ENCODE measurements at regions of chr17 and their contacts with region 1.

Region 1: GRCh38 chr17:40113110-40113906 is 8.5 kb upstream of the MSL1 start:
- DNase-seq: peak; percentile 86 to 96 (median 93)
- ATAC-seq: peak; percentile 78
- H3K4me3 ChIP-seq: peak overlapping the region; percentile 40
- H3K4me3 Mint-ChIP-seq: peak overlapping the region; percentile 82
- H3K27ac ChIP-seq: peak overlapping the region; percentile 12 to 22
- H3K27ac Mint-ChIP-seq: peak overlapping the region; percentile 89
- H3K4me1 ChIP-seq: peaks cover 55% of the 10 kb centered on the region
- H3K4me1 Mint-ChIP-seq: peaks cover 60% of the 10 kb centered on the region
- H3K27me3 ChIP-seq: no peaks in the 10 kb centered on the region
- H3K27me3 Mint-ChIP-seq: no peaks in the 10 kb centered on the region
- CTCF ChIP-seq: peak; percentile 81

Region 2: DNA sequence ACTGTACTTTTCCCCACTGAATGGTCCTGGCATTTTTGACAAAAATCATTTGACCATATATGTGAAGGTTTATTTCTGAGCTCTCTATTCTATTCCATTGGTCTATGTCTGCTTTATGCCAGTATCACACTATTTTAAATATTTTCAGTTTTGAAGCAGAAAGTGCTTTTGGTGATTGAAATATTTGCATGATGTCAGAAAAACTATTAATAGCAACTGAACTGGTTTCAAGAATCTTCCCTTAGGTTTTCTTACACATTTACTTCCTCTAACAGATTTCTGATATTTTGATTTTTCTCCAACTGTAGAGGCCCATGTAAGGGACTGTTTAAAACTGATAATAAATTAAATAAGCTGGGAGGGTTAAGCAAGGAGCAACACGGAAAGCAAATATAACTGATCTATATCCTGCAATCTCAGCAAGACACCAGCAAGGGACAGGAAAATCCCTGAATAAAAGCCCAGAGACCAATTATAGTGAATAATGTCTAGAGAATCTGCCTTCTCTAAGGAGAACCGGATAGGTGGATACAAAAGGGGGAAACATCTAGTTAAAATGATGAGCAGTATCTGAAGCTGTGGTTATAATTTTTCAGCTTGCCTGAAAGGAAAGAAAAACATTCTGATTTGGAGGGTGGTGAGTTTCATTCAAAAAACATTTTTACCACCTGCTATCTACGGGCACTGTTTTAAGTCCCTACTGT is 806.6 kb before region 1 on chr17:
- CTCF ChIA-PET with region 1: no interaction called
- POLR2A ChIA-PET with region 1: no interaction called
- intact Hi-C with region 1: no loop called
- DNase-seq: no peak
- ATAC-seq: no peak
- H3K4me3 ChIP-seq: no peak overlapping the region
- H3K4me3 Mint-ChIP-seq: no peak overlapping the region
- H3K27ac ChIP-seq: no peak overlapping the region
- H3K27ac Mint-ChIP-seq: no peak overlapping the region
- H3K4me1 ChIP-seq: no peaks in the 10 kb centered on the region
- H3K4me1 Mint-ChIP-seq: no peaks in the 10 kb centered on the region
- H3K27me3 ChIP-seq: no peaks in the 10 kb centered on the region
- H3K27me3 Mint-ChIP-seq: no peaks in the 10 kb centered on the region
- CTCF ChIP-seq: no peak

Region 3: GRCh38 chr17:39894681-39895376 is 218.5 kb before region 1 on chr17:
- CTCF ChIA-PET with region 1: no interaction called
- POLR2A ChIA-PET with region 1: no interaction called
- intact Hi-C with region 1: no loop called
- DNase-seq: no peak
- ATAC-seq: no peak
- H3K4me3 ChIP-seq: no peak overlapping the region
- H3K4me3 Mint-ChIP-seq: no peak overlapping the region
- H3K27ac ChIP-seq: no peak overlapping the region
- H3K27ac Mint-ChIP-seq: peak overlapping the region; percentile 16
- H3K4me1 ChIP-seq: no peaks in the 10 kb centered on the region
- H3K4me1 Mint-ChIP-seq: peaks cover 10% of the 10 kb centered on the region
- H3K27me3 ChIP-seq: peaks cover 0 to 2% of the 10 kb centered on the region in 2 experiments
- H3K27me3 Mint-ChIP-seq: no peaks in the 10 kb centered on the region
- CTCF ChIP-seq: no peak

Region 4: DNA sequence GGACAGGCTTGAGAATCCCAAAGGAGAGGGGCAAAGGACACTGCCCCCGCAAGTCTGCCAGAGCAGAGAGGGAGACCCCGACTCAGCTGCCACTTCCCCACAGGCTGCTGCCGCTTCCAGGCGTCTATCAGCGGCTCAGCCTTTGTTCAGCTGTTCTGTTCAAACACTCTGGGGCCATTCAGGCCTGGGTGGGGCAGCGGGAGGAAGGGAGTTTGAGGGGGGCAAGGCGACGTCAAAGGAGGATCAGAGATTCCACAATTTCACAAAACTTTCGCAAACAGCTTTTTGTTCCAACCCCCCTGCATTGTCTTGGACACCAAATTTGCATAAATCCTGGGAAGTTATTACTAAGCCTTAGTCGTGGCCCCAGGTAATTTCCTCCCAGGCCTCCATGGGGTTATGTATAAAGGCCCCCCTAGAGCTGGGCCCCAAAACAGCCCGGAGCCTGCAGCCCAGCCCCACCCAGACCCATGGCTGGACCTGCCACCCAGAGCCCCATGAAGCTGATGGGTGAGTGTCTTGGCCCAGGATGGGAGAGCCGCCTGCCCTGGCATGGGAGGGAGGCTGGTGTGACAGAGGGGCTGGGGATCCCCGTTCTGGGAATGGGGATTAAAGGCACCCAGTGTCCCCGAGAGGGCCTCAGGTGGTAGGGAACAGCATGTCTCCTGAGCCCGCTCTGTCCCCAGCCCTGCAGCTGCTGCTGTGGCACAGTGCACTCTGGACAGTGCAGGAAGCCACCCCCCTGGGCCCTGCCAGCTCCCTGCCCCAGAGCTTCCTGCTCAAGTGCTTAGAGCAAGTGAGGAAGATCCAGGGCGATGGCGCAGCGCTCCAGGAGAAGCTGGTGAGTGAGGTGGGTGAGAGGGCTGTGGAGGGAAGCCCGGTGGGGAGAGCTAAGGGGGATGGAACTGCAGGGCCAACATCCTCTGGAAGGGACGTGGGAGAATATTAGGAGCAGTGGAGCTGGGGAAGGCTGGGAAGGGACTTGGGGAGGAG is 98.0 kb before region 1 on chr17 and contains the start of gene CSF3:
- CTCF ChIA-PET with region 1: interaction called, 19 read pairs
- POLR2A ChIA-PET with region 1: interaction called, 3 read pairs
- intact Hi-C with region 1: loop called in 1 of 2 experiments (anchors 1 kb)
- DNase-seq: no peak
- ATAC-seq: no peak
- H3K4me3 ChIP-seq: no peak within 1 kb of the TSS
- H3K4me3 Mint-ChIP-seq: no peak within 1 kb of the TSS
- H3K27ac ChIP-seq: no peak within 1 kb of the TSS
- H3K27ac Mint-ChIP-seq: no peak within 1 kb of the TSS
- H3K4me1 ChIP-seq: peaks cover 5% of the 10 kb centered on the region
- H3K4me1 Mint-ChIP-seq: peaks cover 6% of the 10 kb centered on the region
- H3K27me3 ChIP-seq: no peaks in the 10 kb centered on the region
- H3K27me3 Mint-ChIP-seq: no peaks in the 10 kb centered on the region
- CTCF ChIP-seq: no peak
- total RNA-seq, gene CSF3: not detected

Region 5: DNA sequence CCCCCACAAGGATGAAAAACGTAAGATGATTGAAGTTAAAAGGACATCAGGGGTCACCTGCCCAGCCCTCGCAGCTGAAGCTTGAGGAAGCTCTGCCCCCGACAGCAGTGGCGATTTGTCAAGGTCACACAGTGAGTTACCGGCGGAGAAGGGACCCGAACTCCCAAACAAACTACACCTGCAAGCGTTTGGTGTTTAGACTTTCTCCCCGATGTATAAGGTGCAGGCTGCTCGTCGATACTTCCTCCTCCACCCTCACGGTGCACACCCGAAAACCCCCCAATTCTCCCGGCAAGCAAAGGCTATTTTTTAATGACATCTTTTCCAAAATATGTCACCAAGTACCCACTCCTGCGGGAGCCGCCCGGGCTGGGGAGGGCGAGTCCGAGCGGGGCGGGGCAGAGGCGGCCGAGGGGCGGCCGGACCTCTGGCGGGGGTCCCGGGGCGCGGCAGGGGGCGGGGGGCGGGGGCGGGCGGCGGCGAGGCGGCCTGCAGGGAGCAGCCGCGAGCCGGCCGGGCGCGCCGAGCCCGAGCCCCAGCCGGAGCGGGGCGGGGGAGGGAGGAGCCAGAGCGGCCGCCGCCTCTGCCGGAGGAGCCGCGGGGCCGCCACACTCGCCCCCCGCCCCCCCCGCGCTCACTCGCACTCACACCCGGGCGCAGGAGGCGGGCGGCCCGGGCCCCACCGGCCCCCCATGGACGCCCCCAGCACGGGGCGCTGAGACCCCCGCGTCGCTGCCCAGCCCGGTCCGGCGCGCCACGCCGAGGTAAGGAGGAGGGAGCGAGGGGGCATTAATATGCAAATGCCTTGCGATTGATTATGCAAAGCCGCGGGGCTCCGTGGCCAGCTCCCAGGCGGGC is 50.8 kb before region 1 on chr17 and contains the start of gene THRA:
- CTCF ChIA-PET with region 1: interaction called, 75 read pairs
- POLR2A ChIA-PET with region 1: interaction called, 56 read pairs
- intact Hi-C with region 1: loop called (anchors 1 to 2 kb)
- DNase-seq: peak; percentile 47 to 88 (median 71)
- ATAC-seq: peak; percentile 90
- H3K4me3 ChIP-seq: peak within 1 kb of the TSS; percentile 84 to 97
- H3K4me3 Mint-ChIP-seq: peak within 1 kb of the TSS; percentile 91
- H3K27ac ChIP-seq: peak within 1 kb of the TSS; percentile 49 to 64
- H3K27ac Mint-ChIP-seq: peak within 1 kb of the TSS; percentile 85
- H3K4me1 ChIP-seq: peaks cover 48% of the 10 kb centered on the region
- H3K4me1 Mint-ChIP-seq: peaks cover 45% of the 10 kb centered on the region
- H3K27me3 ChIP-seq: no peaks in the 10 kb centered on the region
- H3K27me3 Mint-ChIP-seq: no peaks in the 10 kb centered on the region
- CTCF ChIP-seq: no peak
- total RNA-seq, gene THRA: 34.6 to 35.7 TPM

Region 6: DNA sequence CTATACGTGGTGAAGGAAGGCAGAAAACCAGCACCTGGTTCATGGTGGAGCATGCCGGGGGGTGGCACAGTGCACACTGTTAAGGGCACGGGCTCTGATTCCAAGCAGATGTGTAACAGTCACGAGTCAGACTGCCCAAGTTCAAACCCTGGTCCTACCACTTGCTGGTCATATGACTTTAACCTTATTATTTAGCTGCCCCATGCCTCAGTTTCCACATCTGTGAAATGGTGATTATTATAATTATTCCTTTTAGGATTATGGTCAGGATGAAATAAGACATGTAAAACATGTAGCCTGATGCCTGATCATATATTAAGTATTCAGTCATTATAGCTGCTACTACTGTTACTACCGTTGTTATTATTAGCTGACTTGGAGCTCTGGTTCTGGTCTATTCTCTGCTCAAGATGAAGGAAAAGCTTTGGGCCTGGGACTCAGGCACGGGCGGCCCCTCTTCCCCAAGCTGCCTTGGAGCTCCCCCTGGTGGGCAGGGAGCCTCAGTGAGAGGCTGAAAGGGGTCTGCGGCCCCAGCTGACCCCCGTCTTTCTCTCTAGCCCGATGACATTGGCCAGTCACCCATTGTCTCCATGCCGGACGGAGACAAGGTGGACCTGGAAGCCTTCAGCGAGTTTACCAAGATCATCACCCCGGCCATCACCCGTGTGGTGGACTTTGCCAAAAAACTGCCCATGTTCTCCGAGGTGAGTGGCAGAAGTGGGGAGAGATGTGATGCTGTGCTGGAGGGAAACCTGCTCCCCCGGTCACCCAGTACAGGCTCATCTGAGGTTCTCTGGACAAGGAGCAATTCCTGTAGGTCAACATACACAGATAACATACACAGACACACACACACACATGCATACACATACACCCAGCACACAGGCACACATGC is 26.9 kb before region 1 on chr17:
- CTCF ChIA-PET with region 1: interaction called, 237 read pairs
- POLR2A ChIA-PET with region 1: interaction called, 141 read pairs
- intact Hi-C with region 1: no loop called
- DNase-seq: peak in 8 of 9 experiments; percentile 50 to 77 (median 70)
- ATAC-seq: peak; percentile 70
- H3K4me3 ChIP-seq: no peak overlapping the region
- H3K4me3 Mint-ChIP-seq: no peak overlapping the region
- H3K27ac ChIP-seq: no peak overlapping the region
- H3K27ac Mint-ChIP-seq: no peak overlapping the region
- H3K4me1 ChIP-seq: peaks cover 9% of the 10 kb centered on the region
- H3K4me1 Mint-ChIP-seq: peaks cover 9% of the 10 kb centered on the region
- H3K27me3 ChIP-seq: no peaks in the 10 kb centered on the region
- H3K27me3 Mint-ChIP-seq: no peaks in the 10 kb centered on the region
- CTCF ChIP-seq: peak; percentile 80

Region 7: DNA sequence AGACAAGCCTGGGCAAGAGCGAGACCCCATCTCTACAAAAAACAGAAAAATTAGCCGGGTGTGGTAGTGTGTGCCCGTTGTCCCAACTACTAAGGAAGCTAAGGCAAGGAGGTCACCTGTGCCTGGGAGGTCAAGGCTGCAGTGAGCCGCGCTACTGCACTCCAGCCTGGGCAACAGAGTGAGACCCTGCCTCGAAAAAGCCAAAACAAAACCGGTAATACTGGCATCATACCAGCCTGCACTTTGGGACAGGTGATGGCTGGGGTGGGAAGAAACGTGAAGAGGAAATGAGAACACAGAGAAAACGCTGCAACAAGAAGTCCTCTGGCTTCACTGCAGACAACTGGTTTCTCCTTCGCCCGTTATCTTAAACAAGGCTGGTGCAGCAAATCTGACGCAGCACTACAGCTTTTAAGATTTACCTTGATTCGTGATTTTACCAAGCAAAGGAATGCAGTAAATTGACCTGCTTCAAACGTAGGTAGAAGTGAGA is 26.3 kb after region 1 on chr17:
- CTCF ChIA-PET with region 1: interaction called, 32 read pairs
- POLR2A ChIA-PET with region 1: interaction called, 40 read pairs
- intact Hi-C with region 1: loop called (anchors 1 kb)
- DNase-seq: peak in 2 of 9 experiments; percentile 3 to 24
- ATAC-seq: peak; percentile 24
- H3K4me3 ChIP-seq: peak overlapping the region; percentile 57 to 71
- H3K4me3 Mint-ChIP-seq: peak overlapping the region; percentile 89
- H3K27ac ChIP-seq: peak overlapping the region; percentile 93 to 94
- H3K27ac Mint-ChIP-seq: peak overlapping the region; percentile 99
- H3K4me1 ChIP-seq: peaks cover 24% of the 10 kb centered on the region
- H3K4me1 Mint-ChIP-seq: peaks cover 42% of the 10 kb centered on the region
- H3K27me3 ChIP-seq: no peaks in the 10 kb centered on the region
- H3K27me3 Mint-ChIP-seq: no peaks in the 10 kb centered on the region
- CTCF ChIP-seq: no peak

Region 8: DNA sequence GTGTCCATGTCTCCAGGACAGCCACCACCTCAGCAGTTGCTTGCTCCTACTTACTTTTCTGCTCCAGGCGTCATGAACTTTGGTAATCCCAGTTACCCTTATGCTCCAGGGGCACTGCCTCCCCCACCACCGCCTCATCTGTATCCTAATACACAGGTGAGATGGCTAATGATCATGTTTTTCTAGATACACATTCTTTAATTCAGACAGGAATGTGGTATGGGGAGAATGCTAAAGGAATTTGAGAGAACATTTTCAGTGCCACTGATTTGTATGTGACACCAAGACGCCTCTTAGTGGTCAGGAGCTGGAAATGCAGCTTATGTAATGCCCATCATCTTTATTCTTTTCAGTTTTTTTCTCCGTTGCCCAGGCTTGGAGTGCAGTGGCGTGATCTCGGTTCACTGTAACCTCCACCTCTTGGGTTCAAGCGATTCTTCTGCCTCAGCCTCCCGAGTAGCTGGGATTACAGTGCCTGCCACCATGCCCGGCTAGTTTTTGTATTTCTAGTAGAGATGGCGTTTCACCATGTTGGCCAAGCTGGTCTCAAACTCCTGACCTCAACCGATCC is 55.0 kb after region 1 on chr17:
- CTCF ChIA-PET with region 1: interaction called, 118 read pairs
- POLR2A ChIA-PET with region 1: interaction called, 25 read pairs
- intact Hi-C with region 1: loop called (anchors 1 kb)
- DNase-seq: peak in 7 of 9 experiments; percentile 6 to 83 (median 47)
- ATAC-seq: peak; percentile 92
- H3K4me3 ChIP-seq: no peak overlapping the region
- H3K4me3 Mint-ChIP-seq: no peak overlapping the region
- H3K27ac ChIP-seq: no peak overlapping the region
- H3K27ac Mint-ChIP-seq: peak overlapping the region; percentile 80
- H3K4me1 ChIP-seq: peaks cover 4% of the 10 kb centered on the region
- H3K4me1 Mint-ChIP-seq: peaks cover 9% of the 10 kb centered on the region
- H3K27me3 ChIP-seq: no peaks in the 10 kb centered on the region
- H3K27me3 Mint-ChIP-seq: no peaks in the 10 kb centered on the region
- CTCF ChIP-seq: peak; percentile 79

Region 9: GRCh38 chr17:40191237-40192208 is 78.2 kb after region 1 on chr17:
- CTCF ChIA-PET with region 1: interaction called, 67 read pairs
- POLR2A ChIA-PET with region 1: no interaction called
- intact Hi-C with region 1: loop called (anchors 1 kb)
- DNase-seq: peak; percentile 36 to 80 (median 67)
- ATAC-seq: peak; percentile 73
- H3K4me3 ChIP-seq: peak overlapping the region; percentile 51 to 55
- H3K4me3 Mint-ChIP-seq: peak overlapping the region; percentile 95
- H3K27ac ChIP-seq: no peak overlapping the region
- H3K27ac Mint-ChIP-seq: peak overlapping the region; percentile 41
- H3K4me1 ChIP-seq: no peaks in the 10 kb centered on the region
- H3K4me1 Mint-ChIP-seq: peaks cover 9% of the 10 kb centered on the region
- H3K27me3 ChIP-seq: no peaks in the 10 kb centered on the region
- H3K27me3 Mint-ChIP-seq: no peaks in the 10 kb centered on the region
- CTCF ChIP-seq: peak; percentile 49

Region 10: GRCh38 chr17:40279407-40279806 is 166.1 kb after region 1 on chr17:
- CTCF ChIA-PET with region 1: no interaction called
- POLR2A ChIA-PET with region 1: no interaction called
- intact Hi-C with region 1: no loop called
- DNase-seq: no peak
- ATAC-seq: no peak
- H3K4me3 ChIP-seq: no peak overlapping the region
- H3K4me3 Mint-ChIP-seq: no peak overlapping the region
- H3K27ac ChIP-seq: no peak overlapping the region
- H3K27ac Mint-ChIP-seq: peak overlapping the region; percentile 49
- H3K4me1 ChIP-seq: no peaks in the 10 kb centered on the region
- H3K4me1 Mint-ChIP-seq: peaks cover 13% of the 10 kb centered on the region
- H3K27me3 ChIP-seq: no peaks in the 10 kb centered on the region
- H3K27me3 Mint-ChIP-seq: no peaks in the 10 kb centered on the region
- CTCF ChIP-seq: no peak

Region 11: DNA sequence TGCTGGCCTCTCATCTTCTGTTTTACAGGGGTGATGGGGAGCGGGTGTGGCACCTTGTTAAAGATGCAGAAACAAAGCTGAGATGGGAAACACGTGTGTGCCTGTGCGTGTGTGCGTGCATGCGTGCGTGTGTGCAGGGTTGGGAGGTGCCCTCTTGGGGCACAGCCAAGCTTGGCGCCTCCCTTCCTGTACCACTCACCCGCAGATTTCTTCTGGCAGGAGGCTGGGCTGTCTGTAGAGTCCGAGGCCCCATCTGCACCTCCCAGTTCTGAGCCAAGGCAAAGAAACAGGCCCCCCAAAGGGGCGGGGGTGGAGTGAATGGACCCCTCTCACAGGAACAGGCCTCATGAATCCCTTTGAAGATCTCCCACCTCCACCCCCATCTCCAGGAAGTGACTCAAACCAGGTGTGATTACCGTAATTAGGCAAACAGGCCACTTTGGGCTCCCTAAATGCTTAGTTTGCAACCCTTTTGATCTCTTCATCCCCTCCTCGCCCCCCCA is 367.2 kb after region 1 on chr17:
- CTCF ChIA-PET with region 1: no interaction called
- POLR2A ChIA-PET with region 1: no interaction called
- intact Hi-C with region 1: no loop called
- DNase-seq: peak; percentile 65 to 97 (median 82)
- ATAC-seq: peak; percentile 86
- H3K4me3 ChIP-seq: peak overlapping the region in 1 of 2 experiments; percentile 3
- H3K4me3 Mint-ChIP-seq: peak overlapping the region; percentile 50
- H3K27ac ChIP-seq: peak overlapping the region; percentile 65 to 93
- H3K27ac Mint-ChIP-seq: peak overlapping the region; percentile 98
- H3K4me1 ChIP-seq: peaks cover 37% of the 10 kb centered on the region
- H3K4me1 Mint-ChIP-seq: peaks cover 54% of the 10 kb centered on the region
- H3K27me3 ChIP-seq: no peaks in the 10 kb centered on the region
- H3K27me3 Mint-ChIP-seq: no peaks in the 10 kb centered on the region
- CTCF ChIP-seq: no peak